WTC11 (cell line): ENCODE measurements at regions of chr2 and their contacts with region 1.

Region 1: GRCh38 chr2:97774425-97774824 is 61.0 kb downstream of the ZAP70 start:
- DNase-seq: peak; percentile 46
- ATAC-seq: peak; percentile 85
- H3K4me3 Mint-ChIP-seq: no peak overlapping the region
- H3K27ac Mint-ChIP-seq: no peak overlapping the region
- H3K4me1 Mint-ChIP-seq: peaks cover 20% of the 10 kb centered on the region
- H3K27me3 Mint-ChIP-seq: peaks cover 11% of the 10 kb centered on the region
- CTCF ChIP-seq: peak; percentile 37; the same call in 1 of the 2 replicates

Region 2: DNA sequence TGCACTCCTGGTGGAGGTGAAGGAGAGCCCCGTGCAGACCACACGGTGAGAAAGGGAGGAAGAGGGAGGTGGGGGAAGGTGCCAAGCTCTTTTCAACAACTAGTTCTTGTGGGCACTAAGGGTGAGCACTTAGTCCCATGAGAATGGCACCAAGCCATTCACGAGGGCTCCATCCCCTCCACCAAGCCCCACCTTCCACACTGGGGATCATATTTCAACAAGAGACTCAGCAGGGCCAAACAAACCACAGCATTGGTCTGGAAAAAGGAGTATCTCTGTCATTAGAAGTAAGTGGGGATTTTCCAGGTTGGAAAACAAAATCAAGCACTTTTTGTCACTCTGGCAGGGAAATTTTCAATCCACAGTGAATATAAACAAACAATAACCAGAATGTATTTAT is 22.7 kb before region 1 on chr2:
- CTCF ChIA-PET with region 1: interaction called, 13 read pairs
- POLR2A ChIA-PET with region 1: no interaction called
- DNase-seq: no peak
- ATAC-seq: peak; percentile 37
- H3K4me3 Mint-ChIP-seq: no peak overlapping the region
- H3K27ac Mint-ChIP-seq: peak overlapping the region; percentile 67; the same call in 1 of the 2 replicates
- H3K4me1 Mint-ChIP-seq: peaks cover 34% of the 10 kb centered on the region
- H3K27me3 Mint-ChIP-seq: no peaks in the 10 kb centered on the region
- CTCF ChIP-seq: no peak

Region 3: DNA sequence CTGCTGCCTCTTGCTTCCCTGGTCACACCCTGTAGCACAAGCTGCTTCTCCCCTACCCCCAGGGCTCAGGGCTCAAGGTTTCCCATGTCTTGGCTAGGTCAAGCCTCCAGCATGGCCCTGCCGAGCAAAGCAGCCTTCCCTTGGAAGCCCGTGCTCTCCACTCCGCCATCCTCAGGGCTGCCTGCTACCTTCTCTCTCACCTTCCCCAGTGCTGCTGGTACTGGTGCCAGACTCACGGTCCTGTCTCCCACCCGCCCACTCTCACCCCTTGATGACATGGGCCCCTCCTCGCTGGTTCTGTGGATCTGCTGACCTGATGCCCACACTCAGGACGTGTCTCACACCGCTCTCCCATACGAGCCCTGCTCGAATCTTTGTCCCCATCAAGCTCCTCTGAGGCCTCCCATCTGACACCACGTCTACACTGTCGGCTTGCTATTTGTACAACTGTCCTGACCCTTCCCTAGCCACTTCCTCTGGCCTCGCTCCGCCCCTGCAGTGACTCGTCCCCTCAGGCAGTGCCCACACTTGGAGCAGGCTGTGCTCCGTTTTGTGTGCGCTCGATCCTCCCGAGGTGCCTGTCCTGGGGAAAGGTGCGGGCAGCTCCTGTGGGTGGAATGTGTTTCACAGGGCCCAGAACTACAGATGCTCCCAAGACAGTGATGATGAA is 11.1 kb before region 1 on chr2:
- CTCF ChIA-PET with region 1: interaction called, 11 read pairs
- POLR2A ChIA-PET with region 1: no interaction called
- DNase-seq: no peak
- ATAC-seq: no peak
- H3K4me3 Mint-ChIP-seq: no peak overlapping the region
- H3K27ac Mint-ChIP-seq: no peak overlapping the region
- H3K4me1 Mint-ChIP-seq: peaks cover 21% of the 10 kb centered on the region
- H3K27me3 Mint-ChIP-seq: peaks cover 8% of the 10 kb centered on the region
- CTCF ChIP-seq: no peak